A673 (cell line): ENCODE measurements at regions of chr10 and their contacts with region 1.

Region 1: DNA sequence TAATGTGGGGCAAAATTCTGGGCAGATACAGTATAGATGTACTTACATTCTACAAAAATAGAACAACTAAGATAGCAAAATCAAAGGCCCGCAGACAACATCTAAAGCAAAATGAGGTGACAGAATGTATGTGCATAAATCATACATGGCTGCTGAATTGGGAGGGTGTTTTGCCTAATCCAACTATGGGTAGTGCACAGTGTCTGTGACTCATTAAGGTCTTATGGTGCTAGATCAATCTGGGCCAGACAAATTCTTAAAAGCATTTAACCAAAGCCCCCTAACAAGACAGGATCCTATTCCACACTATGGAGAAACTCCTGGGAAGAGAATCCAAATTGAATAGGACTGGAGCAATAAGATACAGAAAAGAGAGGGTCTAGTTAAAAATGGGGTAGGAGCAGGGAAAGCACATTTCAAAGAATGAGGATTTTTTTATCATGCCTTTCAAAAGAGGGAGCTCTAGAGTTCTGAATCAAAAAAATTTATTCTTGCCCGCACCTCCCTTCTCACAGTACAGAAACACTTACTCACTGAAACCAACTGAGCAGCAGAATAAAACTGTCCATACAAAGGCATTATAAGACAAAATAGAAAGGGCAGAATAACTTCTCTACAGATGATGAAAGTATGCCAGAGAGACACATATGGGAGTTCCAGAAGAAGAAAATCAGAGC is 181.3 kb downstream of the RNLS start:
- DNase-seq: peak; percentile 17
- H3K4me3 ChIP-seq: no peak overlapping the region
- H3K27ac ChIP-seq: no peak overlapping the region
- H3K4me1 ChIP-seq: no peaks in the 10 kb centered on the region
- H3K27me3 ChIP-seq: no peaks in the 10 kb centered on the region
- CTCF ChIP-seq: peak; percentile 28; the same call in 1 of the 2 replicates

Region 2: DNA sequence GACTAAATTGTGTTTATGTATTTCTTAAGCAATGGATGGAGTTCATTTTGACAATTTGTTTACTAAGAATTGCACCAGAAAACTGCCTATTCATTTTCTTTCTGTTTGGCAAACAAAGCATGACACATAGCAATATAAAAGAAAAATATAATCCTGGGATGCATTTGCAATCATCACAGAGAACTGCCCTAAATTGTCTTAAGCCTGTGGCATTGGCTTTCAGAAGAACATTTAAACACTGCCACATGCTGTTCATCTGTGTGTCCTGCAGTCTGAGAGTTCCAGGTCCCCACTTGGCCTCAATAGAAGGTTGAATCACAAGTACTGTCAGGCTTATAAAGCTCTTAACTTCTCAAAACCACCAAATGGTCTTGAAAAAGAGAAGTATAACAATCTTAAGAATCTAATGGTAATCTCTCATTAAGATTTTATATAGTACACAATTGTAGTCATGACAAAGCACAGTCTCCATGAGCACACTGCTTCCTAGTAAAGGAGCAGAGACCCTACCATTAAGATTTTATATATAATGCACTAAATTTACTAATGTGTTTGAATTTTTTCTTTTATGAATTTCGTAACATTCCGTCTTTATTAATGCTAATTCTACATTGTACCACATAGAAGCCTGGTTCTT is 151.4 kb after region 1 on chr10:
- CTCF ChIA-PET with region 1: no interaction called
- POLR2A ChIA-PET with region 1: no interaction called
- intact Hi-C with region 1: loop called (anchors 5 kb)
- DNase-seq: peak; percentile 70
- H3K4me3 ChIP-seq: no peak overlapping the region
- H3K27ac ChIP-seq: no peak overlapping the region
- H3K4me1 ChIP-seq: peaks cover 10% of the 10 kb centered on the region
- H3K27me3 ChIP-seq: no peaks in the 10 kb centered on the region
- CTCF ChIP-seq: peak; percentile 82